Activated naive CD4-positive, alpha-beta T cell treated with anti-CD3 and anti-CD28 coated beads for 36 hours (primary cell): ENCODE measurements at regions of chr12 and their contacts with region 1.

Region 1: DNA sequence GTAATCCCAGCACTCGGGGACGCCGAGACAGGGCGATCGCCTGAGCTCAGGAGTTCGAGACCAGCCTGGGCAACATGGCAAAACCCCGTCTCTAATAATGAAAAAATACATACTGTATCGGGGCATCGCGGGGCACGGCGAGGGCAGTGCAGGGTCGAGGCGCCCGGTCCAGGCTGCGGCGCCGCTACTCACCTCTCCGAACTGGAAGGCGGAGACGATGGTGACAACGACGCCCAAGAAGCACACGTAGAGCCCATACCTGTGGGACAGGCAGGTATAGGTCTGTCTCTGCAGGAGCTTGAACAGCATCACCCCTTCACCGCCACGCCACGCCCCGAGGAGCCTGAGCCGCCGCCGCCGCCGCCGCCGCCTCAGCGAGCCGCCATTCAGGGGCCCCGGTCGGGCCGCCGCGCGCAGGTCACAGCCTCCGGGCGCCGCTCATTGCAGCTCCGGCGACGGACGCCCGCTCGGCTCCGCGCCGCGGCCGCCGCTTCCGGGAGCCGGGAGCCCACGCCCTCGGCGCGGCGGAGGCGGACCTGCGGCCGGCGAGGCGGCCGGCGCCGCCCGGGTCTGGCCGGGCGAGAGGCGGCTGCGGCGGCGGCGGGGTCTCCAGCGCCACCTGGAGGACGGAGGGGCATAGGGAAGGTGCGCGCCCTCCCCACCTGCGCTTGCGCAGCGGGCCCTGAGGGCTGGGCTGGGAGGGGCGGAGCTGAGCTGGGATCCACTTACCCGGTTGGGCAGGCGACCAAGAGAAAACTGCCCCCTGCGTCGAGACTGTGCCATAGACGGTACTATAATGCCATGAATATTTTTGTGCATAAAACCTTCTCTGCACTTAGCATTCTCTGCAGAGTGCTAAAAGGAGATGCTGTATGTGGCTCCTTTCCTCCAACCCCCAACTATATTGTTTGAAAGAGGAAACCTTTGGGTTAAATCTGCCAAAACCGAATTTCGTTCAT is at the start of gene GNPTAB:
- DNase-seq: peak; percentile 97
- H3K4me3 Mint-ChIP-seq: peak within 1 kb of the TSS; percentile 96
- H3K27ac Mint-ChIP-seq: peak within 1 kb of the TSS; percentile 84
- H3K4me1 Mint-ChIP-seq: peaks cover 43% of the 10 kb centered on the region
- H3K27me3 Mint-ChIP-seq: no peaks in the 10 kb centered on the region
- total RNA-seq, gene GNPTAB: 13.6 to 13.7 TPM

Region 2: DNA sequence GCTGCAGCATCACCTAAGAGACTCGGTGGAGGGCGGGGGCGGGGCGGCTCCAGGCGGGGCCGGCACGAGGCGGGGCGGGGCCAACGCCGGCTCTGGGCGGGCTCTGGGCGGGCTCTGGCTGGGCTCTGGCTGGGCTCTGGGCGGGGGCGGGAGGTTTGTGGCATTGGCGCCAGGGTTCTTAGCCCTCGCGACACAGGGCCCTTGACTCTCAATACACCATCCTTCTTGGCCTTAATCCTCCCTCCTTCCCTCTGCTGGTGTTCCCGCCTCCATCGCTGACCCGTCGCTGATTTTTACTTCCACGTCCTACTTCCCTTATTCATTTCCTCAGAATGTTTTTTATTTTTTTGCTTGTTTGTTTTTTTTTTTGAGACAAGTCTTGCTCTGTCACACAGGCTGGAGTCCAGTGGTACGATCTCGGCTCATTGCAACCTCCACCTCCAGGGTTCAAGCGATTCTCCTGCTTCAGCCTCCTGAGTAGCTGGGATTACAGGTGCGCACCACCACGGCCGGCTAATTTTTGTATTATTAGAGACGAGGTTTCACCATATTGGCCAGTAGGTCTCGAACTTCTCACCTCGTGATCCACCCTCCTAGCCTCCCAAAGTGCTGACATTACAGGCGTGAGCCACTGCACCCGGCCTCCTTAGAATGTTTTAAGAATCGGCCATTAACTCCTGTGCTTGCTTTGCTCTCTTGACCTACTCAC is 1687.6 kb before region 1 on chr12 and contains the start of gene BLTP3B:
- CTCF ChIA-PET with region 1: no interaction called
- intact Hi-C with region 1: no loop called
- DNase-seq: peak; percentile 93
- H3K4me3 Mint-ChIP-seq: peak within 1 kb of the TSS; percentile 91
- H3K27ac Mint-ChIP-seq: peak within 1 kb of the TSS; percentile 97
- H3K4me1 Mint-ChIP-seq: peaks cover 36% of the 10 kb centered on the region
- H3K27me3 Mint-ChIP-seq: no peaks in the 10 kb centered on the region
- total RNA-seq, gene BLTP3B: 27.0 to 27.2 TPM

Region 3: DNA sequence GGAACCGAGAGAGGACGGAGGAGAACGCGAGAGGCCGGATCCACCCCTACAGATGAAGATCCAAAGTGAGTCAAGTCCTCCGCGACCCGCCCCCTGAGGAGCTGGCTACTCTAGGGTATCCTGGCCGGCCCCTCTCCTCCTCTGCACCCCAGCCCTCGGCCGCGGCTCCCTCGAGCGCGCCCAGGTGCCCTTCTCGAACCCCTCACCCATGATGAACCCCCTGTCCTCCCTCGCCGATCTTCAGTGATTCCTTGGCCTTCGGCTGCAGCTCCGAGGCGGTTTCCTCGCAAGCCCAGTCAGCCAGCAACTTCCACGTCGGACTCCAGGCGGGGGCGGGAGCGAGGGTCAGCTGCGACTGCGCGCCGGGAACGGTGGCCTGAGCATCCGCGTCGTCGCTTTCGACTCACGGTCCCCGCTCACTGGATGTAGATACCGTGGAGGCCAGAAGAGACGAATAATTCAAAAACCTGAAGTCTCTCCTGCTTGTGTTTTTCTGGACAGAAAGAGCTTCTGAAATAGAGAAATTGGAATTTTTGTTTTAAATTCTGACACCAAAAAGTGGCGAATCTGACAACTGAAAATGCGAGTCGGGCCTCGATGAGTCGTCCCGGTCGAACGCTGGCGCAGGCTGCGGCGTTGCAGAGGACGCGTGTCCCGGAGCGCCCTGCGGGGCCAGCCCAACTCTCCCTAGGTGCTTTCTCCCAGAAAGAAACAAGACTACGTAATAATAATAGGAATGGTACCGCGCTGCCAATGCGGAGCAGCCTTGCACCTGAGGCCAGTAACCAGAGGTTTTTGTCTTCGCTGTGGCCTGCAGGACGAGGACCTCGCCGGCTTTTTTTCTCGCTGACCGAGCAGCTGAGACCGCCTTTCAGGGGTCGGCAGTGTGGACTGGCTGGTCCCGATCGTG is 423.0 kb before region 1 on chr12 and contains the start of gene ARL1:
- CTCF ChIA-PET with region 1: no interaction called
- intact Hi-C with region 1: loop called (anchors 2 kb)
- DNase-seq: peak; percentile 84
- H3K4me3 Mint-ChIP-seq: peak within 1 kb of the TSS; percentile 93
- H3K27ac Mint-ChIP-seq: peak within 1 kb of the TSS; percentile 90
- H3K4me1 Mint-ChIP-seq: peaks cover 19% of the 10 kb centered on the region
- H3K27me3 Mint-ChIP-seq: peaks cover 6% of the 10 kb centered on the region
- total RNA-seq, gene ARL1: 44.1 to 48.4 TPM

Region 4: DNA sequence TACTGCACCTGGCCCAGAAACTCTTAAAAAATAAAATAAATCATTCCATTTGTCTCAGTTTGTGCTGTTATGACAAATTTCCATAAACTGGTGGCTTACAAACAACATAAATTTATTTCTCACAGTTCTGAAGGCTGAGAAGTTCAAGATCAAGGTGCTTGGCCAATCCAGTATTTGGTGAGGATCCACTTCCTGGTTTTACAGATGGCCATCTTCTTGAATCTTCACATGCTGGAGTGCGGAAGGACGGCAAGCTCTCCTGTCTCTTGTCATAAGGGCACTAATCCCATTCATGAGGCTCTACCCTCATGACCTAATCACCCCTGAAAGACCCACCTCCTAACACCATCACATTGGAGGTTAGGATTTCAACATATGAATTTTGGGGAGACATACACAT is 265.7 kb before region 1 on chr12:
- CTCF ChIA-PET with region 1: no interaction called
- intact Hi-C with region 1: loop called (anchors 5 kb)
- DNase-seq: peak; percentile 14
- H3K4me3 Mint-ChIP-seq: no peak overlapping the region
- H3K27ac Mint-ChIP-seq: no peak overlapping the region
- H3K4me1 Mint-ChIP-seq: peaks cover 21% of the 10 kb centered on the region
- H3K27me3 Mint-ChIP-seq: peaks cover 10% of the 10 kb centered on the region

Region 5: DNA sequence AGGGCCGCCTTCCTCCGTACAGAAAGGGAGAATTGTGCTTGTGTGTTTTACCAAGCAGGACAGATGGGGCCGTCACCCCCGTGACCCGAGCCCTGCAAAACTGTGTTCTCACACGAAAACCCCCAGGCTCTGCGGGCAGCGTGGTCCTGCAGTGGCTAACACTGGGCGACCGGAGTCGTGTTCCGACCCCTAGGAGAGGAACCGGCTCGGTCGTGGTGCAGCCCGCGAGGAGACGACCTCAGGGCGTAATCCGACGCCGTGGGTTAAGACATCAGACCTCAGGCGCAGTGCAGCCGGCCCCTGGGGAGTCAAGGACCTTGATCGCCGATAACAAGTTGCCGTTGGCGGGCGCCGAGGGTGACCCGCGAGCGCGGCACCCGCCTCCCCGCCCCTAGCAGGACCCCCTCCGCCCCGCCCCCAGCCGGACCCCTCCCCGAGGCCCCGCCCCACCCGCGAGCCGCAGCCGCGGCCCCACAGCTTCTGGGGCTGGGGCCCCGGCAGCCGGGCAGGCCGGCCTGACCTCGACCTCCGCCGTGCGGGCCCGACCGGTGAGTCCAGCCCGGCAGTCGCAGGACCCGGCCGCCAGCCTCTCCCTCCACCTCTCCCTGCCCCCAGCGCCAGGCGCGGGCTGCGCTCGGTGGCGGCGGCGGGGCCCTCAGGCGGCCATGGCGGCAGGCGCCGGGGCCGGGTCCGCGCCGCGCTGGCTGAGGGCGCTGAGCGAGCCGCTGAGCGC is 133.3 kb before region 1 on chr12 and contains the start of gene CHPT1:
- CTCF ChIA-PET with region 1: no interaction called
- intact Hi-C with region 1: loop called (anchors 2 kb)
- DNase-seq: peak; percentile 57
- H3K4me3 Mint-ChIP-seq: peak within 1 kb of the TSS; percentile 87
- H3K27ac Mint-ChIP-seq: peak within 1 kb of the TSS; percentile 80
- H3K4me1 Mint-ChIP-seq: peaks cover 45% of the 10 kb centered on the region
- H3K27me3 Mint-ChIP-seq: no peaks in the 10 kb centered on the region
- total RNA-seq, gene CHPT1: 17.1 to 20.0 TPM

Region 6: DNA sequence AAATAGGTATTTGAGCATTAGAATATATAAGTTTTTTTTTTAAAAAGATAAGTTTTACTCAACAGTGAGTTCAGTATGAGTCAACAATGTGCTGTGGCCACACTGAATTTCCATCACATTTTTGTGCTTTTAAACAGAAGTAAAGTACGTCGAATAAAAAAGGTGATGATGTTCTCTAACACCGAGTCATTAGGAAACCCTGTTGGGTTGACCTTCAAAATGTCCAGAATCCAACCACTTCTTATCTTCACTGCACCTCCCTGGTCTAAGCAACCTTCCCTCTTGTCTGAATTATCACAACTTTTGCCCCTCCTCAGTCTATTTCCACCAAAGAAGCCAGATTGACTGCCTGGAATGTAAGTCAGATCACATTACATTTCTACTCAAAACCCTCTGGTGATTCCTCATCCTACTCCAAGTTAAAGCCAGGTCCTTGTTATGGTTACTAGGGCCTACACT is 48.3 kb before region 1 on chr12:
- CTCF ChIA-PET with region 1: interaction called, 27 read pairs
- intact Hi-C with region 1: loop called (anchors 2 kb)
- DNase-seq: no peak
- H3K4me3 Mint-ChIP-seq: no peak overlapping the region
- H3K27ac Mint-ChIP-seq: no peak overlapping the region
- H3K4me1 Mint-ChIP-seq: peaks cover 15% of the 10 kb centered on the region
- H3K27me3 Mint-ChIP-seq: no peaks in the 10 kb centered on the region

Region 7: GRCh38 chr12:101850199-101850598 is 19.6 kb after region 1 on chr12:
- CTCF ChIA-PET with region 1: interaction called, 10 read pairs
- intact Hi-C with region 1: no loop called
- DNase-seq: no peak
- H3K4me3 Mint-ChIP-seq: no peak overlapping the region
- H3K27ac Mint-ChIP-seq: no peak overlapping the region
- H3K4me1 Mint-ChIP-seq: peaks cover 12% of the 10 kb centered on the region
- H3K27me3 Mint-ChIP-seq: no peaks in the 10 kb centered on the region

Region 8: GRCh38 chr12:101876861-101877815 is 46.5 kb after region 1 on chr12 and contains the start of gene DRAM1:
- CTCF ChIA-PET with region 1: interaction called, 3 read pairs
- intact Hi-C with region 1: loop called (anchors 1 kb)
- DNase-seq: peak; percentile 83
- H3K4me3 Mint-ChIP-seq: peak within 1 kb of the TSS; percentile 91
- H3K27ac Mint-ChIP-seq: peak within 1 kb of the TSS; percentile 64
- H3K4me1 Mint-ChIP-seq: peaks cover 12% of the 10 kb centered on the region
- H3K27me3 Mint-ChIP-seq: peaks cover 3% of the 10 kb centered on the region
- total RNA-seq, gene DRAM1: 4.1 to 4.9 TPM

Region 9: GRCh38 chr12:102167821-102168604 is 337.4 kb after region 1 on chr12:
- CTCF ChIA-PET with region 1: no interaction called
- intact Hi-C with region 1: no loop called
- DNase-seq: no peak
- H3K4me3 Mint-ChIP-seq: no peak overlapping the region
- H3K27ac Mint-ChIP-seq: peak overlapping the region; percentile 69
- H3K4me1 Mint-ChIP-seq: peaks cover 11% of the 10 kb centered on the region
- H3K27me3 Mint-ChIP-seq: no peaks in the 10 kb centered on the region